ENCODE measurements at regions of chr9 and their contacts with region 1.

Region 1: GRCh38 chr9:88303721-88304451 is 84.4 kb upstream of the SPIN1 start:
- DNase-seq: peak; percentile 23
- ATAC-seq: peak; percentile 74
- H3K4me3 ChIP-seq: no peak overlapping the region
- H3K27ac ChIP-seq: no peak overlapping the region
- H3K4me1 ChIP-seq: no peaks in the 10 kb centered on the region
- H3K27me3 ChIP-seq: no peaks in the 10 kb centered on the region
- CTCF ChIP-seq: no peak
- EP300 ChIP-seq: peak; percentile 23 to 60; a peak in 1 of 4 replicates
- POLR2A ChIP-seq: no peak
- RAD21 ChIP-seq: no peak

Region 2: DNA sequence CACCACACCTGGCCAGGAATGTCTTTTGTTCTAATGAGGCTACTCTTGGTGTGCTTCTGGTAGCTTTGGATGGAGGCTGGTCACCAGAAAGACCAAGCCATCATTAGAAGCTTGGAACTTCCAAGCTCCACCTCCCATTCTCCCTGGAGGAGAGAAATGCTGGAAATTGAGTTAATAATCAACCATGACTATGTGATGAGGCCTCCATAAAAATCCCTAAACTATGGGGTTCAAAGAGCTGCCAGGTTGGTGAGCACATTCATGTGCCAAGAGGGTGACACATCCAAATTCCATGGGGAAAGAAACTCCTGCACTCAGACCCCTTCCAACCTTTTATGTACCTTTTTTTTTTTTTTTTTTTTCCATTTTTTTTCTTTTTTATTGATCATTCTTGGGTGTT is 60.1 kb before region 1 on chr9:
- CTCF ChIA-PET with region 1: no interaction called
- POLR2A ChIA-PET with region 1: no interaction called
- RAD21 ChIA-PET with region 1: no interaction called
- SMC1A ChIA-PET with region 1: no interaction called
- in situ Hi-C with region 1: no loop called
- intact Hi-C with region 1: loop called (anchors 10 kb)
- DNase-seq: no peak
- ATAC-seq: no peak
- H3K4me3 ChIP-seq: no peak overlapping the region
- H3K27ac ChIP-seq: no peak overlapping the region
- H3K4me1 ChIP-seq: no peaks in the 10 kb centered on the region
- H3K27me3 ChIP-seq: no peaks in the 10 kb centered on the region
- CTCF ChIP-seq: no peak
- EP300 ChIP-seq: no peak
- POLR2A ChIP-seq: no peak
- RAD21 ChIP-seq: no peak

Region 3: GRCh38 chr9:88258027-88258426 is 45.9 kb before region 1 on chr9:
- CTCF ChIA-PET with region 1: no interaction called
- POLR2A ChIA-PET with region 1: no interaction called
- RAD21 ChIA-PET with region 1: no interaction called
- SMC1A ChIA-PET with region 1: no interaction called
- in situ Hi-C with region 1: no loop called
- intact Hi-C with region 1: no loop called
- DNase-seq: no peak
- ATAC-seq: no peak
- H3K4me3 ChIP-seq: no peak overlapping the region
- H3K27ac ChIP-seq: no peak overlapping the region
- H3K4me1 ChIP-seq: no peaks in the 10 kb centered on the region
- H3K27me3 ChIP-seq: no peaks in the 10 kb centered on the region
- CTCF ChIP-seq: no peak
- EP300 ChIP-seq: no peak
- POLR2A ChIP-seq: no peak
- RAD21 ChIP-seq: no peak

Region 4: DNA sequence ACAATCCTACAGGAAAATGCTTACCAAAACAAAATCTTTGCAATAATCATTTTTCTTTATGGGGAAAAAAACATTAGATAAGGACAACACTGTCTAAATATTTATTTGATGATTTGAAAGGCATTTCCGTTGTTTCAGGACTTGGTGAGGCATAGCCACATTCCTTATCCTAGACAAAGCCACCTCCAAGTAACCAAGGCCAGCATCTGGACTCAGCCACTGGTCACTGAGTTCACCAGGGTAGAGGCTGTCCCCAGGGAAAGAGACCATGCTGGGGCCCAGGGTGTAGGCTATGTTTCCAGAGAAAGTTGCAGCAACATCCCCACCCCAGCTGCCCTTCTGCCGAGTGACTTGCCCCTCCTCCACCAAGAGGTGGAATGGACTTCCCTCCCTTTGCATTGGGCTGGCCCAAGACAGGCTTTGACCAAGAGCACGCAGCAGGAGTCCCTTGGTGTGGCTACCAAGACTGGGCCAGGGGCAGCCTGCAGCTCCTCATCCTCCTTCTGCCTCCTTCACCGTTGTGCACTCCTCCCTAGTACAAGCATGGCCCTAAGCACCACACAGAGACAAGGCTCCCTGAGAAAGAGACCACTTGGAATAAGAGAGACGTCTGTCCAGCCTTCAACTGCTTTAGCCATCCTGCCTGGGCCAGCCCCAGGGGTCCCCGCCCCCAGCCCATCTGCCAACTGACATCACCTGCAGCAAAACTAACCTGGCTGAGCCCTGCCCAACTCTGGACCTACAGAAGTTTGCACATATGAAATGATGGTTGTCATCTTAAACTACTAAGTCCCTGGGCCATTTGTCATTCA is 16.3 kb after region 1 on chr9:
- CTCF ChIA-PET with region 1: no interaction called
- POLR2A ChIA-PET with region 1: no interaction called
- RAD21 ChIA-PET with region 1: no interaction called
- SMC1A ChIA-PET with region 1: no interaction called
- in situ Hi-C with region 1: no loop called
- intact Hi-C with region 1: no loop called
- DNase-seq: no peak
- ATAC-seq: no peak
- H3K4me3 ChIP-seq: no peak overlapping the region
- H3K27ac ChIP-seq: no peak overlapping the region
- H3K4me1 ChIP-seq: no peaks in the 10 kb centered on the region
- H3K27me3 ChIP-seq: no peaks in the 10 kb centered on the region
- CTCF ChIP-seq: no peak
- EP300 ChIP-seq: no peak
- POLR2A ChIP-seq: no peak
- RAD21 ChIP-seq: no peak

Measured in GM12878 (cell line).